BJ (cell line): ENCODE measurements at regions of chr9 and their contacts with region 1.

Region 1: GRCh38 chr9:35690431-35691333 is 957 bp upstream of the TPM2 start:
- DNase-seq: peak; percentile 26
- H3K4me3 ChIP-seq: peak overlapping the region; percentile 98
- H3K27me3 ChIP-seq: no peaks in the 10 kb centered on the region
- CTCF ChIP-seq: no peak

Region 2: GRCh38 chr9:35657546-35658136 is 33.0 kb before region 1 on chr9 and contains the start of gene RMRP:
- CTCF ChIA-PET with region 1: interaction called, 63 read pairs
- POLR2A ChIA-PET with region 1: interaction called, 8 read pairs
- DNase-seq: peak; percentile 98
- H3K4me3 ChIP-seq: peak within 1 kb of the TSS; percentile 69
- H3K27me3 ChIP-seq: no peaks in the 10 kb centered on the region
- CTCF ChIP-seq: peak; percentile 36; the same call in 1 of the 2 replicates
- polyA plus RNA-seq, gene RMRP: 235 and 1,738 TPM in 2 replicates

Region 3: GRCh38 chr9:35675732-35676392 is 14.8 kb before region 1 on chr9:
- CTCF ChIA-PET with region 1: interaction called, 29 read pairs
- POLR2A ChIA-PET with region 1: interaction called, 11 read pairs
- DNase-seq: no peak
- H3K4me3 ChIP-seq: peak overlapping the region; percentile 38
- H3K27me3 ChIP-seq: no peaks in the 10 kb centered on the region
- CTCF ChIP-seq: no peak